GM12878 (cell line): ENCODE measurements at regions of chr3 and their contacts with region 1.

Region 1: GRCh38 chr3:18758047-18758704 is 333.0 kb upstream of the SATB1 start:
- DNase-seq: peak; percentile 28
- ATAC-seq: peak; percentile 97
- H3K4me3 ChIP-seq: no peak overlapping the region
- H3K27ac ChIP-seq: no peak overlapping the region
- H3K4me1 ChIP-seq: no peaks in the 10 kb centered on the region
- H3K27me3 ChIP-seq: no peaks in the 10 kb centered on the region; a peak in 2 of 4 replicates
- CTCF ChIP-seq: peak; percentile 76 to 85 (median 76)
- EP300 ChIP-seq: no peak
- POLR2A ChIP-seq: no peak
- RAD21 ChIP-seq: peak; percentile 90

Region 2: DNA sequence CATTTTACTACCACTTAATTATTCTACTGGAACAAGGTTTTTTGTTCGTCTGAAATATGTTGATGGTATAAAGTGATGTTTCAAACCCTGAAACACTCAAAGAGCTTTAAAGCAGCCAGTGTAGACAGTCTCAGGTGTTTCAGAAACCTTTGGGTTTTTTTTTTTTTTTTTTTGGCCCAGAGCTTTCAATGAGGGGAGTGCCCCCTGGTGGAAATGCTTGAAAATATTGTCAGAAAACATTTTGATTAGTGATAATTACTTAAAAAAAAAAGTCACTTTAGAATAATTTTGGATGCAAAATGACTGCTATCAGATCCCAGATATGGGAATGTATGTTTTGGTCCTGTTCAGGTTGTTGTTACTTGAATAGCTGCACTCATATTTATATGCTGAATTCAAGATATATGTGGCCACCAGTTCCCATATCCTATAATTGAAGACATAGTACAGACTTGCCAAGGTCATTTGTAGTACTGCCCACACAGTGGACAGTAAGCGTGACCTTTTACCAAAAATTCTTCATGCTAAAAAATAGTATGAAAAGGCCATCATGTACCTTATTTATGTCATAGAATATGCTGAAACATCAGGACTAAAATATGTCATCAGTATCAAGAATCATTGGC is 369.0 kb before region 1 on chr3:
- CTCF ChIA-PET with region 1: interaction called, 15 read pairs
- POLR2A ChIA-PET with region 1: no interaction called
- RAD21 ChIA-PET with region 1: interaction called, 3 read pairs
- SMC1A ChIA-PET with region 1: interaction called, 4 read pairs
- in situ Hi-C with region 1: no loop called
- intact Hi-C with region 1: no loop called
- DNase-seq: no peak
- ATAC-seq: 0 out of 3 replicates have a peak, but pooled peaks have one; percentile 27
- H3K4me3 ChIP-seq: no peak overlapping the region
- H3K27ac ChIP-seq: no peak overlapping the region
- H3K4me1 ChIP-seq: no peaks in the 10 kb centered on the region
- H3K27me3 ChIP-seq: no peaks in the 10 kb centered on the region
- CTCF ChIP-seq: peak; percentile 36 to 43 (median 42); a peak in 5 of 6 replicates
- EP300 ChIP-seq: no peak
- POLR2A ChIP-seq: no peak
- RAD21 ChIP-seq: peak; percentile 72

Region 3: DNA sequence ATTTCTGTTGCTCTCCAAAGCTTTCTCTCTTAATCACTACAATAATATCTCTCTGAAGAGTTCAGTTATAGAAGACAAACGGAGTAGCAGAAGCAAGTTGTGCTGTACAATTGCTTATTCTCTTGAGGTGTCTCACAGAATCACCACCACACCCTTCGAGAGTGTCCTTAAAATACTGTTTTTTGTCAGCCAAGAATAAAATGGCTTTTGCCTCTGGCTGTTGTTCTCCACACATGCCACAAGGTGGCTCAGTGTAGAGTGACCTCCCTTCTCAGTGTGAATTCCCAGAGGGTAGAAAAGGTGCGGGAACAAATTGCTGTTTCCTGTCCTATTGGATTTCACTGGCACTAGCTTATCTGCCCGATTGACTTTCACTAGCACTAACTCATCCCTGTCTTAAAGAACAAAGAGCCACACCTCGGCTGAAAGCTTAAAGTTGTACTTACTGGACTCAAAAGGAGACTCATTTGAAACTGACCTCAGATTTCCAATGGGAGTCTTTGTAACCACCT is 198.8 kb before region 1 on chr3:
- CTCF ChIA-PET with region 1: interaction called, 99 read pairs
- POLR2A ChIA-PET with region 1: no interaction called
- RAD21 ChIA-PET with region 1: interaction called, 48 read pairs
- SMC1A ChIA-PET with region 1: interaction called, 61 read pairs
- in situ Hi-C with region 1: loop called (anchors 5 kb)
- intact Hi-C with region 1: loop called (anchors 1 kb)
- DNase-seq: no peak
- ATAC-seq: peak; percentile 77
- H3K4me3 ChIP-seq: no peak overlapping the region
- H3K27ac ChIP-seq: no peak overlapping the region
- H3K4me1 ChIP-seq: no peaks in the 10 kb centered on the region
- H3K27me3 ChIP-seq: no peaks in the 10 kb centered on the region
- CTCF ChIP-seq: peak; percentile 70 to 74 (median 72); a peak in 5 of 6 replicates
- EP300 ChIP-seq: no peak
- POLR2A ChIP-seq: no peak
- RAD21 ChIP-seq: peak; percentile 68

Region 4: DNA sequence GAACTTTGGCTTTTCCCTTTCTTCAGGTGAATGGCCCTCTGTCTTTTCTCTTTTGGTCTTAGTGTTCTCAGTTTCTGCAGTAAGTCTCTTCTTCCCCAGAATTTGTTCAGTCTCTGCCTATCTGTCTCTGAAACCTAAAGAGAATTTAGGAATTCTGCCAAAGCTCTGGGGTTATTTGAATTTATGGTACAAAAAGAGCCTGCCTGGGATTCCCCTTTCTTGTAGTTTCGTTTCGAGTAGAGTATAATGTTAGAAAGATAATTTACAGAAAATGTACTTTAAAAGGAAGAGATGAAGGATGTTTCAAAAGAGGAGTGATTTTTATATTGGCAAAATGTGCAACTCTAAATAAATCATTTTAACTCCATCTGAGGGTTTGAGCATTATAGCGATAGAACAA is 85.6 kb before region 1 on chr3:
- CTCF ChIA-PET with region 1: no interaction called
- POLR2A ChIA-PET with region 1: no interaction called
- RAD21 ChIA-PET with region 1: no interaction called
- SMC1A ChIA-PET with region 1: no interaction called
- in situ Hi-C with region 1: no loop called
- intact Hi-C with region 1: loop called (anchors 5 kb)
- DNase-seq: no peak
- ATAC-seq: no peak
- H3K4me3 ChIP-seq: no peak overlapping the region
- H3K27ac ChIP-seq: no peak overlapping the region
- H3K4me1 ChIP-seq: no peaks in the 10 kb centered on the region
- H3K27me3 ChIP-seq: no peaks in the 10 kb centered on the region
- CTCF ChIP-seq: no peak
- EP300 ChIP-seq: no peak
- POLR2A ChIP-seq: no peak
- RAD21 ChIP-seq: no peak

Region 5: DNA sequence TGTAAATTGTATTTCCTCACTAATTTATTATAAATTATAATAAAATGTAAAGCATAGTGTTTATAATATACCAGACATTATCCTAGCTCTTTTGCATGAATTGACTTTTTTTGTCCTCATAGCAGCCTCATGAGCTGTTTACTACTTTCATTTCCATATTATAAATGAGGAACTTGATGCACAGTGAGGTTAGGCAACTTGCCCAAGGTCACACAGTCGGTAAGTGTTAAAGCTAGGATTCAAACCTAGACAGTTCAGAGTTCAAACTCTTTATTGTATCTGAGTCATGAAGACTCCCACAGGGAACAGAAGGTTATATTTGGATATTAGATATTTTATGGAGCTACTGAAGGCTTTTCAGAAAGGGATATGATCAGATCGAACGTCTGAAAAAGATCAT is 10.8 kb before region 1 on chr3:
- CTCF ChIA-PET with region 1: interaction called, 27 read pairs
- POLR2A ChIA-PET with region 1: no interaction called
- RAD21 ChIA-PET with region 1: interaction called, 9 read pairs
- SMC1A ChIA-PET with region 1: interaction called, 4 read pairs
- in situ Hi-C with region 1: no loop called
- intact Hi-C with region 1: no loop called
- DNase-seq: no peak
- ATAC-seq: peak; percentile 40; the same call in 1 of the 3 replicates
- H3K4me3 ChIP-seq: no peak overlapping the region
- H3K27ac ChIP-seq: no peak overlapping the region
- H3K4me1 ChIP-seq: no peaks in the 10 kb centered on the region
- H3K27me3 ChIP-seq: no peaks in the 10 kb centered on the region; a peak in 1 of 4 replicates
- CTCF ChIP-seq: no peak
- EP300 ChIP-seq: no peak
- POLR2A ChIP-seq: no peak
- RAD21 ChIP-seq: no peak